B cell (primary cell): ENCODE measurements at regions of chr17 and their contacts with region 1.

Region 1: GRCh38 chr17:1783834-1784611 is 22.2 kb downstream of the SERPINF1 start:
- DNase-seq: peak; percentile 83
- ATAC-seq: peak; percentile 87
- H3K4me3 ChIP-seq: peak overlapping the region in 2 of 5 experiments; percentile 15 to 22
- H3K4me3 Mint-ChIP-seq: peak overlapping the region; percentile 80
- H3K27ac ChIP-seq: peak overlapping the region; percentile 92 to 97
- H3K27ac Mint-ChIP-seq: peak overlapping the region; percentile 98
- H3K4me1 ChIP-seq: peaks cover 27 to 30% of the 10 kb centered on the region in 2 donors
- H3K4me1 Mint-ChIP-seq: peaks cover 28% of the 10 kb centered on the region
- H3K27me3 ChIP-seq: no peaks in the 10 kb centered on the region
- H3K27me3 Mint-ChIP-seq: no peaks in the 10 kb centered on the region
- CTCF ChIP-seq: peak; percentile 73

Region 2: GRCh38 chr17:1648963-1649843 is 134.8 kb before region 1 on chr17:
- CTCF ChIA-PET with region 1: interaction called, 12 read pairs
- POLR2A ChIA-PET with region 1: no interaction called
- intact Hi-C with region 1: no loop called
- DNase-seq: peak; percentile 96
- ATAC-seq: peak; percentile 72
- H3K4me3 ChIP-seq: peak overlapping the region in 4 of 5 experiments; percentile 35 to 75 (median 60)
- H3K4me3 Mint-ChIP-seq: peak overlapping the region; percentile 79
- H3K27ac ChIP-seq: peak overlapping the region in 1 of 2 donors; percentile 28
- H3K27ac Mint-ChIP-seq: peak overlapping the region; percentile 75
- H3K4me1 ChIP-seq: peaks cover 26 to 36% of the 10 kb centered on the region in 2 donors
- H3K4me1 Mint-ChIP-seq: peaks cover 30% of the 10 kb centered on the region
- H3K27me3 ChIP-seq: no peaks in the 10 kb centered on the region
- H3K27me3 Mint-ChIP-seq: no peaks in the 10 kb centered on the region
- CTCF ChIP-seq: peak; percentile 79

Region 3: GRCh38 chr17:1684378-1685189 is 99.4 kb before region 1 on chr17 and contains the start of gene PRPF8:
- CTCF ChIA-PET with region 1: interaction called, 9 read pairs
- POLR2A ChIA-PET with region 1: no interaction called
- intact Hi-C with region 1: loop called (anchors 1 kb)
- DNase-seq: peak; percentile 99
- ATAC-seq: peak; percentile 99
- H3K4me3 ChIP-seq: peak within 1 kb of the TSS; percentile 88 to 97 (median 92)
- H3K4me3 Mint-ChIP-seq: peak within 1 kb of the TSS; percentile 100
- H3K27ac ChIP-seq: peak within 1 kb of the TSS; percentile 90 to 92
- H3K27ac Mint-ChIP-seq: peak within 1 kb of the TSS; percentile 100
- H3K4me1 ChIP-seq: peaks cover 17 to 28% of the 10 kb centered on the region in 2 donors
- H3K4me1 Mint-ChIP-seq: peaks cover 37% of the 10 kb centered on the region
- H3K27me3 ChIP-seq: no peaks in the 10 kb centered on the region
- H3K27me3 Mint-ChIP-seq: no peaks in the 10 kb centered on the region
- CTCF ChIP-seq: no peak
- total RNA-seq, gene PRPF8: 418 and 423 TPM in 2 replicates

Region 4: GRCh38 chr17:1695365-1695764 is 88.7 kb before region 1 on chr17:
- CTCF ChIA-PET with region 1: no interaction called
- POLR2A ChIA-PET with region 1: no interaction called
- intact Hi-C with region 1: no loop called
- DNase-seq: no peak
- ATAC-seq: no peak
- H3K4me3 ChIP-seq: no peak overlapping the region
- H3K4me3 Mint-ChIP-seq: no peak overlapping the region
- H3K27ac ChIP-seq: no peak overlapping the region
- H3K27ac Mint-ChIP-seq: no peak overlapping the region
- H3K4me1 ChIP-seq: no peaks in the 10 kb centered on the region
- H3K4me1 Mint-ChIP-seq: no peaks in the 10 kb centered on the region
- H3K27me3 ChIP-seq: peaks cover 0 to 3% (median 0%) of the 10 kb centered on the region in 4 experiments
- H3K27me3 Mint-ChIP-seq: peaks cover 13% of the 10 kb centered on the region
- CTCF ChIP-seq: no peak

Region 5: DNA sequence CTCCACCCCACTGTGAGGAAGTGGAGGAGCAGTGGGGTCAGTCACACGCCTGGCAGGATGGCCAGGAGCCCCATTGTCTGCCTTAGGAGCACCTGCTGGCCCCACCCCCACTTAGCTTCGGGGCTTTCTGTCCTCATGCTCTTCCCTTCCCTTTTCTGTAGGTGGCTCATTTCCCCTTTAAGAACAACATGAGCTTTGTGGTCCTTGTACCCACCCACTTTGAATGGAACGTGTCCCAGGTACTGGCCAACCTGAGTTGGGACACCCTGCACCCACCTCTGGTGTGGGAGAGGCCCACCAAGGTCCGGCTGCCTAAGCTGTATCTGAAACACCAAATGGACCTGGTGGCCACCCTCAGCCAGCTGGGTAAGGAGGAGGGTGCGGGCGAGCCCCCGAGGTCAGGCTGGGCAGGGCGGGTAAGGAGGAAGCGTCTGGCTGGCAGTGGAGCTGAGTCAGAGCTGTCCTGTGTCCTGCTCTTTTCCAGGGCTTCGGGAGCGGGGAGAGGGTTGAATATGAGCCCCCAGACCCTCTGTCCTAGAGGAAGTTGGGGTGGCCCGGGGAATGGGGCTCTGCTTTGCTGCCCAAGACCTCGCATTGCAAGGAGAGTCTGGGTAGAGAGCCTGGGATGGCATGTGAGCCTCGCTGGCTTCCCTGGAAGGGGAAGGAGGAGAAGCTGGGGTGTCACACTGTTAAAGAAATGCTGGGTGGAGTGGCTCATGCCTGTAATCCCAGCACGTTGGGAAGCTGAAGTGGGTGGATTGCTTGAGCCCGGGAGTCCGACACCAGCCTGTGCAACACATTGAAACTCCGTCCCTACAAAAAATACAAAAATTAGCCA is 31.4 kb before region 1 on chr17:
- CTCF ChIA-PET with region 1: interaction called, 58 read pairs
- POLR2A ChIA-PET with region 1: interaction called, 5 read pairs
- intact Hi-C with region 1: loop called (anchors 1 kb)
- DNase-seq: peak; percentile 75
- ATAC-seq: peak; percentile 82
- H3K4me3 ChIP-seq: peak overlapping the region in 2 of 5 experiments; percentile 17 to 21
- H3K4me3 Mint-ChIP-seq: peak overlapping the region; percentile 67
- H3K27ac ChIP-seq: peak overlapping the region in 1 of 2 donors; percentile 6
- H3K27ac Mint-ChIP-seq: peak overlapping the region; percentile 82
- H3K4me1 ChIP-seq: peaks cover 10 to 15% of the 10 kb centered on the region in 2 donors
- H3K4me1 Mint-ChIP-seq: peaks cover 15% of the 10 kb centered on the region
- H3K27me3 ChIP-seq: no peaks in the 10 kb centered on the region
- H3K27me3 Mint-ChIP-seq: no peaks in the 10 kb centered on the region
- CTCF ChIP-seq: no peak

Region 6: DNA sequence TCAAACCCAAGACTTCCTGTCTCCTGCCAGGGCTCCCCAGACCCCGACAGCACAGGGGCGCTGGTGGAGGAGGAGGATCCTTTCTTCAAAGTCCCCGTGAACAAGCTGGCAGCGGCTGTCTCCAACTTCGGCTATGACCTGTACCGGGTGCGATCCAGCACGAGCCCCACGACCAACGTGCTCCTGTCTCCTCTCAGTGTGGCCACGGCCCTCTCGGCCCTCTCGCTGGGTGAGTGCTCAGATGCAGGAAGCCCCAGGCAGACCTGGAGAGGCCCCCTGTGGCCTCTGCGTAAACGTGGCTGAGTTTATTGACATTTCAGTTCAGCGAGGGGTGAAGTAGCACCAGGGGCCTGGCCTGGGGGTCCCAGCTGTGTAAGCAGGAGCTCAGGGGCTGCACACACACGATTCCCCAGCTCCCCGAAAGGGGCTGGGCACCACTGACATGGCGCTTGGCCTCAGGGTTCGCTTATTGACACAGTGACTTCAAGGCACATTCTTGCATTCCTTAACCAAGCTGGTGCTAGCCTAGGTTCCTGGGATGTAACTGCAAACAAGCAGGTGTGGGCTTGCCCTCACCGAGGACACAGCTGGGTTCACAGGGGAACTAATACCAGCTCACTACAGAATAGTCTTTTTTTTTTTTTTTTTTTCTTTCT is 14.1 kb before region 1 on chr17:
- CTCF ChIA-PET with region 1: interaction called, 69 read pairs
- POLR2A ChIA-PET with region 1: interaction called, 48 read pairs
- intact Hi-C with region 1: loop called (anchors 1 kb)
- DNase-seq: peak; percentile 62
- ATAC-seq: peak; percentile 54
- H3K4me3 ChIP-seq: no peak overlapping the region
- H3K4me3 Mint-ChIP-seq: peak overlapping the region; percentile 68
- H3K27ac ChIP-seq: peak overlapping the region; percentile 34 to 43
- H3K27ac Mint-ChIP-seq: peak overlapping the region; percentile 90
- H3K4me1 ChIP-seq: peaks cover 26 to 55% of the 10 kb centered on the region in 2 donors
- H3K4me1 Mint-ChIP-seq: peaks cover 36% of the 10 kb centered on the region
- H3K27me3 ChIP-seq: no peaks in the 10 kb centered on the region
- H3K27me3 Mint-ChIP-seq: no peaks in the 10 kb centered on the region
- CTCF ChIP-seq: no peak

Region 7: GRCh38 chr17:2336215-2336851 is 552.3 kb after region 1 on chr17 and contains the start of gene TSR1:
- CTCF ChIA-PET with region 1: no interaction called
- POLR2A ChIA-PET with region 1: no interaction called
- intact Hi-C with region 1: no loop called
- DNase-seq: peak; percentile 90
- ATAC-seq: peak; percentile 81
- H3K4me3 ChIP-seq: peak within 1 kb of the TSS; percentile 77 to 87 (median 82)
- H3K4me3 Mint-ChIP-seq: peak within 1 kb of the TSS; percentile 100
- H3K27ac ChIP-seq: peak within 1 kb of the TSS in 1 of 2 donors; percentile 64
- H3K27ac Mint-ChIP-seq: peak within 1 kb of the TSS; percentile 95
- H3K4me1 ChIP-seq: peaks cover 9 to 25% of the 10 kb centered on the region in 2 donors
- H3K4me1 Mint-ChIP-seq: peaks cover 24% of the 10 kb centered on the region
- H3K27me3 ChIP-seq: no peaks in the 10 kb centered on the region
- H3K27me3 Mint-ChIP-seq: no peaks in the 10 kb centered on the region
- CTCF ChIP-seq: no peak
- total RNA-seq, gene TSR1: 29.8 and 31.5 TPM in 2 replicates